Panc1 (cell line): ENCODE measurements at regions of chr3 and their contacts with region 1.

Region 1: DNA sequence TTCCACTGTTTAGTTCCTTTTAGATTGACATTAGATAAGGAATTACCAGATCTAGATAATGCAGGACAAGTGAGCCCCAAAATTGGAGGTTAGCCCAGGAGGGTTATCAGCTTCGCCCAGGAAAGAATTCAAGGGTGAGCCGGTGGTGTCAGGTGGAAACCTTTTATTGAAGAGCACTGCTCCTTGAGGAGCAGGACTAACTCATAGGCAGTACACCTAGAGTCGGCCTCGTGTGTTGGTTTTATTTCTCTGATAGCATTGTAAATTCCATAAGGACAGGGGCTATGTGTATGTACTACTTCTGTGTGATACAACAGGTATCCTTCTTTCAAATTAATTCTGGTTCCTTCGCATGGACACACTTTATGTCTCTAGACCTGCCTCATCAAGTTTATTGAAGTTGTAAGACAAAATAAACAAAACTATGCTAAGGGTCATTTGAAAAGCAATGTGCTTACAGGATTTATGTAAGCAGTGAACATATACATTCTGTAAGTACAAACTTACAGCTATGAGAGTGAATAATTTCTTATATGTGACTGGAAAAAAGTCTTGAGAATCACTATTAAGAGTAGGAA is 57.2 kb downstream of the SNX4 start:
- DNase-seq: no peak
- ATAC-seq: no peak
- H3K4me3 ChIP-seq: no peak overlapping the region
- H3K27ac ChIP-seq: no peak overlapping the region
- H3K4me1 ChIP-seq: no peaks in the 10 kb centered on the region
- H3K27me3 ChIP-seq: no peaks in the 10 kb centered on the region
- CTCF ChIP-seq: no peak

Region 2: DNA sequence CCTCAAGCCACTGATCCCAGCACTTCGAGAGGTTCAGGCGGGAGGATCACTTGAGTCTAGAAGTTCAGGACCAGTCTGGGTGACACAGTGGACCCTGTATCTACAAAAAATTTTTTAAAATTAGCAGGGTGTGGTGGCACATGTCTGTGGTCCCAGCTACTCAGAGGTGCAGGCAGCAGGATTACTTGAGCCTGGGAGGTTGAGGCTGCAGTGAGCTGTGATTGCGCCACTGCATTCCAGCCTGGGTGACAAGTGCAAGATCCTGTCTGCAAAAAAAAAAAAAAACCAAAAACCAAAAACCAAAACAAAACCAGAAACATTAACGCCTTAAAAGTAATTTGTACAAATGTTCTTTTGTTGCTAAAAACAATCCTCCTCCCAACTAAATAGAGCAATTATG is 222.3 kb before region 1 on chr3:
- CTCF ChIA-PET with region 1: no interaction called
- POLR2A ChIA-PET with region 1: no interaction called
- in situ Hi-C with region 1: no loop called
- intact Hi-C with region 1: no loop called
- DNase-seq: no peak
- ATAC-seq: no peak
- H3K4me3 ChIP-seq: no peak overlapping the region
- H3K27ac ChIP-seq: no peak overlapping the region
- H3K4me1 ChIP-seq: no peaks in the 10 kb centered on the region
- H3K27me3 ChIP-seq: no peaks in the 10 kb centered on the region
- CTCF ChIP-seq: no peak

Region 3: DNA sequence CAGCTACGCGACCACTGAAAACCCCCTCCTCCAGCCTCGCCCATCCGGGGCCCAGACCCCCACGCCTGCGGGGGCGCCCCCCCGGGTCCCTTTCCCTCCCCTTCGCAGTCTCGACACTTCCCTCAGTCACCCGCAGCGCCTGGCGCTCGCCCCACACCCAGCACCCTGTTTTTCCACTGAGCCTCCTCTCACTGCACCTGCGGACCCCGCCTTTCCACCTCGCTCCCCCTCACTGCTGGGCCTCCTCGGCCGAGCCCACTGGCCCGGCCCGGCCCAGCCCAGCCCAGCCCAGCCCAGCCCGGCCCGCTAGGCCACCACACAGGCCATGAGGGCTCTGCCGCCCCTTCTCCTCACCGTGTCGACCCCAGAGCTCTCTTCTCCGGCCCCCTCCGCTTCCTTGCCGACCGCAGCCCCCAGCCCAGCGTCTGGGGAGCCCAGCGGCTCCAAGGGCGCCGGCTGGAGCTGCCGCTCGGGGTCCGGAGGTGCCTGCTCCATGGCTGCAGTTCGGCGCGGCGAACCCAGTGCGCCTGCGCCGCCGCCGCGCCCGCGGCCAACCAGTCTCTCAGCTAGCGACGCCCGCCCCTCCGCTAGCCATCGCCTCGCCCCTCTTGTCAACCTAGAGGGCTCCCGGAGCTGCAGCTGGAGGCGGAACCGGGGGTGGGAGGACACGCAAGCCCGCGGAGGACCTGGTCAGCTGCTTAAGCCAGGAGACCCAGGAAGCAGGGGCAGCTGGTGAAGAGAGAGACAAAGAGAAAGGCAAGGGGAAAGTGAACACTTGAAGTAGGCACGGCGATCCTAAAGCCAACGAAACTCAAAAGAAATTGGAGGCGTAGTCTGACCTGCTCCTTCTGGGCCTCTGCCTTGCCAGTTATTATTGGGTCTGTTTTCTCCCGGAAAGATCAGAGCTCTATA is 57.1 kb after region 1 on chr3 and contains the start of gene SNX4:
- CTCF ChIA-PET with region 1: no interaction called
- POLR2A ChIA-PET with region 1: interaction called, 14 read pairs
- in situ Hi-C with region 1: no loop called
- intact Hi-C with region 1: no loop called
- DNase-seq: peak; percentile 45
- ATAC-seq: peak; percentile 100
- H3K4me3 ChIP-seq: peak within 1 kb of the TSS; percentile 69 to 95
- H3K27ac ChIP-seq: peak within 1 kb of the TSS; percentile 67
- H3K4me1 ChIP-seq: 0 out of 2 replicates have a peak, but pooled peaks cover 3% of the 10 kb centered on the region
- H3K27me3 ChIP-seq: no peaks in the 10 kb centered on the region
- CTCF ChIP-seq: no peak
- total RNA-seq, gene SNX4: 34.3 TPM

Region 4: GRCh38 chr3:126270145-126270811 is 807.5 kb after region 1 on chr3:
- CTCF ChIA-PET with region 1: no interaction called
- POLR2A ChIA-PET with region 1: no interaction called
- in situ Hi-C with region 1: no loop called
- intact Hi-C with region 1: no loop called
- DNase-seq: no peak
- ATAC-seq: no peak
- H3K4me3 ChIP-seq: no peak overlapping the region
- H3K27ac ChIP-seq: no peak overlapping the region
- H3K4me1 ChIP-seq: peaks cover 13% of the 10 kb centered on the region
- H3K27me3 ChIP-seq: no peaks in the 10 kb centered on the region
- CTCF ChIP-seq: no peak